A673 (cell line): ENCODE measurements at regions of chr6 and their contacts with region 1.

Region 1: GRCh38 chr6:137707590-137708360 is 159.3 kb upstream of the TNFAIP3 start:
- DNase-seq: peak; percentile 78
- H3K4me3 ChIP-seq: no peak overlapping the region
- H3K27ac ChIP-seq: no peak overlapping the region
- H3K4me1 ChIP-seq: no peaks in the 10 kb centered on the region
- H3K27me3 ChIP-seq: no peaks in the 10 kb centered on the region
- CTCF ChIP-seq: peak; percentile 79

Region 2: GRCh38 chr6:137834508-137834907 is 126.7 kb after region 1 on chr6:
- CTCF ChIA-PET with region 1: no interaction called
- POLR2A ChIA-PET with region 1: no interaction called
- intact Hi-C with region 1: loop called (anchors 1 kb)
- DNase-seq: no peak
- H3K4me3 ChIP-seq: no peak overlapping the region
- H3K27ac ChIP-seq: no peak overlapping the region
- H3K4me1 ChIP-seq: no peaks in the 10 kb centered on the region
- H3K27me3 ChIP-seq: no peaks in the 10 kb centered on the region
- CTCF ChIP-seq: no peak

Region 3: DNA sequence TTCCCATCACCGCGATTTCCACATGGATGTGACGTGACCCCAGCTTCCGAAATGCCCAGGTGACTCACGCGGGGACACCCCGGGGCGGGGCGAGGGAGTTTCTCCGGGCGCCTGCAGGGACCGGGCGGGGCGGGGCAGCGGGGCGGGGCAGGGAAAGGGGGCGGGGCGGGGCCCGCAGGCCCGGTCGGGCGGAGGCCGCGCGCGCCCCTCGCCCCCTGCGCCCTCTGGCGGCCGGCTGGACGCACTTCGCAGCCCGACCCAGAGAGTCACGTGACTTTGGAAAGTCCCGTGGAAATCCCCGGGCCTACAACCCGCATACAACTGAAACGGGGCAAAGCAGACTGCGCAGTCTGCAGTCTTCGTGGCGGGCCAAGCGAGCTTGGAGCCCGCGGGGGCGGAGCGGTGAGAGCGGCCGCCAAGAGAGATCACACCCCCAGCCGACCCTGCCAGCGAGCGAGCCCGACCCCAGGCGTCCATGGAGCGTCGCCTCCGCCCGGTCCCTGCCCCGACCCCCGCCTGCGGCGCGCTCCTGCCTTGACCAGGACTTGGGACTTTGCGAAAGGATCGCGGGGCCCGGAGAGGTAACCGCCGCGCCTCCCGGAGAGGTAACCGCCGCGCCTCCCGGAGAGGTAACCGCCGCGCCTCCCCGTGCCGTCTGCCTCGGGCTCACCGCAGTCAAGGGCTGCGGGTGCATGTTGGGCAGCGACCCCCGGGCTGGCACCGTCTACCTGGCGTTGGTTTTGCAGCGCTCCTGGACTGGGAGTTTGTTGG is 159.3 kb after region 1 on chr6 and contains the start of gene TNFAIP3:
- CTCF ChIA-PET with region 1: interaction called, 5 read pairs
- POLR2A ChIA-PET with region 1: no interaction called
- intact Hi-C with region 1: loop called (anchors 1 kb)
- DNase-seq: peak; percentile 90
- H3K4me3 ChIP-seq: peak within 1 kb of the TSS; percentile 59
- H3K27ac ChIP-seq: no peak within 1 kb of the TSS
- H3K4me1 ChIP-seq: peaks cover 8% of the 10 kb centered on the region
- H3K27me3 ChIP-seq: peaks cover 77% of the 10 kb centered on the region
- CTCF ChIP-seq: peak; percentile 62
- total RNA-seq, gene TNFAIP3: 6.2 and 12.7 TPM in 2 replicates

Region 4: DNA sequence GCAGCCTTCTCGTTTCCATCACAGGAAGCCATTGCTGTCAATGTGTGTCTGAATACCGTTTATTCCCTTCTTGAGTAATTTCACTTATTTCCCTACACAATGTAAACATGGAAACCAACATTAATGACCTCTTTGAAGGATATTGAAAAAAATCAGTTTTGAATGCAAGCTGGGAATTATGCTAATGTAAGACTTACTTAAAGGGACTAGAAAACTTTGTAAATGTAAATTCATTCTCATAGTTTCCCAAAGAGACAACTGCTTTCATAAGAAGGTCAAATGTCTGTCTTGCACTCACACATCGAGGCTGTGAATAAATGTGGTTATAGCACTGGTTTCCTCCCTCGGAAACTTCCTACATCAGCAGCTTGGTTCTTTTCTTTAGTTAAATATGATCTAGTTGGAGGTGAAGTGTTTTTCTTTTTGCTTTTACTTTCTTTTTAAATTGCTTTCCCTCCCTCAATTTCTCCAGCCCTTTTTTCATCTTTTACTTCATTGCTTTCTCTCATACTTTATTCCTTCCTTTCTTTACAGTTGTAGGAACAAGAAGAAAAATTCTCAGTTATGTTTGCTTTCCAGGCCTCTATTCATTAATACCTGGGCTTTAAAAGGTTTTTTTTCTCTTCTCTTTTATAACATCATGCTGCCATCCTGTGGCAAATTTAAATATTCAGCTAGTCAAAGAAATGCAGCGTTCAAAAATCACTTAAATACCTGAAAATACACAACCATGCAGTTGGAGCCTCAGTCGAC is 267.6 kb after region 1 on chr6:
- CTCF ChIA-PET with region 1: no interaction called
- POLR2A ChIA-PET with region 1: no interaction called
- intact Hi-C with region 1: loop called (anchors 10 kb)
- DNase-seq: peak; percentile 12
- H3K4me3 ChIP-seq: no peak overlapping the region
- H3K27ac ChIP-seq: no peak overlapping the region
- H3K4me1 ChIP-seq: no peaks in the 10 kb centered on the region
- H3K27me3 ChIP-seq: peaks cover 7% of the 10 kb centered on the region
- CTCF ChIP-seq: no peak

Region 5: GRCh38 chr6:138109042-138109997 is 401.5 kb after region 1 on chr6:
- CTCF ChIA-PET with region 1: no interaction called
- POLR2A ChIA-PET with region 1: no interaction called
- intact Hi-C with region 1: loop called (anchors 5 kb)
- DNase-seq: peak; percentile 67
- H3K4me3 ChIP-seq: no peak overlapping the region
- H3K27ac ChIP-seq: no peak overlapping the region
- H3K4me1 ChIP-seq: no peaks in the 10 kb centered on the region
- H3K27me3 ChIP-seq: peaks cover 50% of the 10 kb centered on the region
- CTCF ChIP-seq: peak; percentile 94